AG04449 (cell line): ENCODE measurements at regions of chr19 and their contacts with region 1.

Region 1: DNA sequence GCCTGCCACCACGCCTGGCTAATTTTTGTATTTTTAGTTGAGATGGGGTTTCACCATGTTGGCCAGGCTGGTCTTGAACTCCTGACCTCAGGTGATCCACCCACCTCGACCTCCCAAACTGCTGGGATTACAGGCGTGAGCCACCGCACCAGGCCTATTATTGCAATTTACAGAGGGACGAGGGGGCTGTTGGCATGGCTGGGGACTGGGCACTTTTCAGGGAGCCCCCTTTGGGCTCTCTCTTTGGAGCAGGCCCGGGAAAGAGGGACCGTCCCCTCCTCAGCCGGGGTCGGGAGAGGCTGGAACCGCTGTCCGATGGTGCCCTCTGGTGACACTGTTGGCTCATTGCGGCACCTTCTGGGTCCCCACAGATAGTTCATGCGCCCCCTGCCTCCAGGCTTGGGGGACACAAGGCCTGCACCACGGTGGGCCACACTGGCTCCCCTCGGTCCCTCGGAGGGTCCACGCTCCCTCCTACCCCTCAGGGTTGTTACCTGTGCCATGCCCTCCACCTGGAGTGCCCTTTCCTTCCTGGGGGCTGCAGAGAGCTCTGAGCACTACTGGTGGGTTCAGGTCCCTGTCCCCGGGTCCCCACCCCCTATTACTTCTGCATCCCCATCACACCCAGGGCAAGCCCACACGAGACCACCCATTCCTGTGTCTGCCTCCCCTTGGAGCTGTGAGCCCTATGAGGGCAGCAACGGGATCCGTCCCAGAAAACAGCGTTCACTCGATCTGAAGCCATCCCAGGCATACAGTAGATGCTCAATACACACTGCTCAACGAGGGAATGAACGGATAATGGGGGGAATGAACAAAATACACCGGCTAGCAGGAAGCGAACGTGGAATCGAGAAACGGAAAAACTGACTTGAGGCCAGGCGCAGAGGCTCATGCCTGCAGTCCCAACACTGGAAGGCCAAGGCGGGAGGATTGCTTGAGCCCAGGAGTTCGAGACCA is 12.5 kb downstream of the FEM1A start:
- DNase-seq: no peak
- H3K4me3 ChIP-seq: no peak overlapping the region
- CTCF ChIP-seq: peak; percentile 87

Region 2: DNA sequence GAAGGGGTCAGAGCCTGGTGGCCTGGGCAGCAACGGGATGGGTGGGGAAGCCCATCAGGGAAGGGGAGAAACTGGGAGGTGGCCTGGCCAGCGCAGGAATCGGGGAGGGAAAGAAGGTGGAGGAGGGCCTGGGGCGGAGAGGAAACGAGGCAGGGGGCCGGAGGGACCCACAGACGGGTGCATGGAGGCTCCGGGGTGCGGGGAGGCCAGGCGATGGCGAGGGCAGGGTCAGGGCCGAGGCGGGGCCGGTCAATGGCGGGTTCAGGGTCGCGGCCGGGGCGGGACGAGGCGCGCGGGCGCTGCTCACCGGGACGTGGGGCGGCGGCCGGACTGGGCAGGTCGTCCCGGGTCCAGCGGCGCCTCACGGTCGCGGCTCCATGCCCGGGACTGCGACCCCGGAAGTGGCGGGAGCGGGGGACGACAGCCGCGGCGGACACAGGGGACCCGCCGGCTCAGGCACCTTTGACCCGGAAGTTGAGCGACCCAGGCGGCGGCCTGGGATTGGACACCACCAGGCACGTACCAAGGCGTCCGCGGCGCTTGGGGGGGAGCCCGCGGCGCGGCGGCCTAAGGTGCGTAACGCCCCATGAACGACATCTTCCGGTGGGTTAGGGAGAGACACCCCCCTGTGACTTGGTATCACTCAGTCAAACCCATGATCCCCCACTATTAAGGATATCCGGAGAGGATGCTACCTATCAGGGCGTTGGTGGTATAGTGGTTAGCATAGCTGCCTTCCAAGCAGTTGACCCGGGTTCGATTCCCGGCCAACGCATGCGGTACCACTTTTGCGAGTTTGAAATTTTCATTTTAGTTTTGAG is 80.4 kb before region 1 on chr19 and contains the start of gene DPP9:
- CTCF ChIA-PET with region 1: interaction called, 76 read pairs
- POLR2A ChIA-PET with region 1: no interaction called
- DNase-seq: peak; percentile 89
- H3K4me3 ChIP-seq: peak within 1 kb of the TSS; percentile 93
- CTCF ChIP-seq: peak; percentile 21